Left colon (tissue), 2 donors: ENCODE measurements at regions of chr7 and their contacts with region 1.

Region 1: GRCh38 chr7:44847508-44847920 is 373 bp downstream of the H2AZ2 start:
- DNase-seq: peak; percentile 87 to 89
- ATAC-seq: peak; percentile 75

Region 2: DNA sequence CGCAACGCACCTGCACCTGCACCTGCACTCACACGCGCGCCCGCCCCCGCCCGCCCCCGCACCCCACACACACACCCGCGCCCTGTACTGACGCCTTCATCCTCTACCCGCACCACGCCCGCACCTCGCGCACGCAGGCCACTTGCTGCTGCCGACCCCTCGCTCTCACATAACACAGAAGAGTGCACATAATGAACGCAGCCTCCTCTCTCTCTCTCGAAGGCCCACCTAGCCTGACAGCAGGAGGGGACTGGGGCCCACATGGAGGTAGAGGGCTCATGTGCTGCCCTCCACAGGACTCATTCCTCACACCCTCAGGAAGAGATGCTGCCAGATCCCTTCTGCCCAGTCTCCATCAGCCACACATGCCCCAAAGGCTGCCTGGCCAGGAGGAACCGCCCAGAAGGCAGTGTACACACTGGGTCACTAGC is 521.7 kb before region 1 on chr7:
- intact Hi-C with region 1: no loop called
- DNase-seq: no peak
- ATAC-seq: no peak

Region 3: GRCh38 chr7:44490351-44491200 is 356.9 kb before region 1 on chr7 and contains the start of gene NUDCD3:
- intact Hi-C with region 1: loop called in 1 of 2 experiments (anchors 5 kb)
- DNase-seq: peak; percentile 86 to 89
- ATAC-seq: peak; percentile 94
- total RNA-seq, gene NUDCD3: 66.3 to 72.4 TPM

Region 4: DNA sequence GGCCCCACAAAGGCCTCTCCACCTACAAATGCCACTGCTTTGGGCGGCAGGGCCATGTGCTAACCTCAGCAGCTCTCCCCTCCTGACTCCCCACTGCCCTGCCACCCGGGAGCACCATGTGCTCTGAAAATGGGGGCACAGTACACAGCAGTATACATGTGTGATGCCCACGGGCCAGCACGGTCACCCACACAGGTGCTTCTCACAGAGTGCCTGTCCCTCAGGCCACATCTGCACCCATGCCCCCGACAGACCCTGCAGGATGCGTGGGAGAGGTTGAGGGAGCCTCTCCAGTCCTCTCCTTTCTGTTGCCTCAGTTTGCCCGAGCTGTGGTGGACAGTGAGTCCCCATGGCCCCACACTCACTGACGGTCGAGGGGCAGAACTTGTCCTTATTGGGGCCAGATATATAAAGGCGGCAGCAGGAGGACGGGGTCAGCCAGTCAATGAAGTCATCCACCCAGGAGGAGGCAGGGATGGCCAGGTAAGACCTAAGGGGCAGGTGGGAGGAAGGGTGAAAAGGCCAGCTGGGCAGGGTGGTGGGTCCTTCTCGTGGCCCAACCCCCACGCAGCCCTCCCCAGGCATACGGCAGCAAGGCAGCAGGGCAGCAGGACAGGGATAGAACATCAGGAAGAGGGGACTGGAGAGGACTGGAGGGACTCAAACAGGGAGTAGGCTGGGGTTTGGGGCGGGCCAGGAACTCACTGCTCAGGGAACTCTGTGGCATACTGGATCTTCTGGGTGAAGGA is 326.0 kb before region 1 on chr7:
- intact Hi-C with region 1: no loop called
- DNase-seq: no peak
- ATAC-seq: no peak

Region 5: DNA sequence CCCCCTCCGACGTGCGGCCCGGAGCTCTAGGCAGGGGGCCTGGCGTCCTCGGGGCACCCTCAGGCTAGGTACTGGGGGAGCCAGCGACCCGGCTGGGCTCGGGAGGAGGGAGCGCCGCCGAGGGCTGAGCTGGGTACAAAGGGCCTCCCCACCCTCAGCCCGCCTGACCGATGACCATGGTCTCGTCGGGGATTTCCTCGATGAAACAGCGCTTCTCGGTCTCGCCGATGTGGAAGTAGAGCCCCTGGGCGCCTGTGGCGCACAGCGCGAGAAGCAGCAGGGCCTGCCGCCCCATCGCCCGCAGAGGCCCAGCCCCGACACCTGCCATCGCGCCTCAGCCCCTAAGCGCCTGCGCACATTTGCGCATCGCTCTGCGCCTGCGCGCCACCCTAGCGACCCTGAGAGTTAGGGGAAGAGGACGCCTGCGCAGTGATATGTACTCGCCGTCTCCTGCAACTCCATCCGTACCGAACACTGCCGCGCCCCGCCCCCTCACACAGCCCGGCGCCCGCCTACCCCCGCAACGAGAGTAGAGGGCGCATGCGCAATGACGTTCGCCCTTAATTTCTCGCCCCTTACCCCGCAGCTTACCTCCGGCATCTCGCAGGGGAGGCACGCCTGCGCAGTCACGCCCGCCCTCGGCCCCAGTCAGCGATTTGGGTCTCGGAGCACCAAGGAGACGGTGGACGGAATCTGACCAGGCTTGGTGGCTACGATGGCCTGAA is 265.5 kb before region 1 on chr7 and contains the start of gene TMED4:
- intact Hi-C with region 1: loop called in 1 of 2 experiments (anchors 10 kb)
- DNase-seq: peak; percentile 100
- ATAC-seq: peak; percentile 92
- total RNA-seq, gene TMED4: 90.4 to 96.2 TPM

Region 6: GRCh38 chr7:44738051-44738723 is 109.3 kb before region 1 on chr7:
- intact Hi-C with region 1: no loop called
- DNase-seq: no peak
- ATAC-seq: no peak

Region 7: GRCh38 chr7:44885394-44886317 is 38.1 kb after region 1 on chr7 and contains the start of gene PURB:
- intact Hi-C with region 1: loop called in 1 of 2 experiments (anchors 2 kb)
- DNase-seq: peak; percentile 94 to 98
- ATAC-seq: peak; percentile 95
- total RNA-seq, gene PURB: 19.7 to 20.9 TPM